ENCODE measurements at regions of chr11 and their contacts with region 1.

Region 1: GRCh38 chr11:35158701-35159510 is 19.9 kb downstream of the CD44 start:
- DNase-seq: peak; percentile 43 to 48
- ATAC-seq: peak; percentile 64 to 75
- H3K4me3 ChIP-seq: no peak overlapping the region
- H3K27ac ChIP-seq: peak overlapping the region; percentile 13 to 47 (median 30)
- H3K4me1 ChIP-seq: peaks cover 8 to 29% of the 10 kb centered on the region in 2 donors
- H3K27me3 ChIP-seq: no peaks in the 10 kb centered on the region
- CTCF ChIP-seq: no peak
- POLR2A ChIP-seq: no peak

Region 2: GRCh38 chr11:34523068-34523467 is 635.8 kb before region 1 on chr11:
- in situ Hi-C with region 1: no loop called
- intact Hi-C with region 1: no loop called
- DNase-seq: no peak
- ATAC-seq: no peak
- H3K4me3 ChIP-seq: no peak overlapping the region
- H3K27ac ChIP-seq: no peak overlapping the region
- H3K4me1 ChIP-seq: no peaks in the 10 kb centered on the region
- H3K27me3 ChIP-seq: no peaks in the 10 kb centered on the region
- CTCF ChIP-seq: no peak
- POLR2A ChIP-seq: no peak

Region 3: DNA sequence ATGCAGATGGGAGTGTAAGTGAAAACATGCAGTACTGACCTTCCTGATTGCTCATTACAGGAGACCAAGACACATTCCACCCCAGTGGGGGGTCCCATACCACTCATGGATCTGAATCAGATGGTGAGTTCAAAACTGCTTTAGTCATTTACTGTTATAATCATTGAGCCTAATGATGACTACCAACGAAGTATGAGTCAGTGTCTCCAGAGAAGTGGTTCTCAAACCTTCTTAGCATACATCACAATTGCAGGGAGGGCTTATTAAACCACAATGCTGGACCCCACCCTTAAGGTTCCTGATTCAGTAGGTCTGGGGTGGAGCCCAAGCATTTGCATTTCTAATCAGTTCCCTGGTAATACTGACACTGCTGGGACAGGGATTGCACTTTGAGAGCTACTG is 55.9 kb after region 1 on chr11:
- in situ Hi-C with region 1: loop called in 1 of 4 experiments (anchors 10 kb)
- intact Hi-C with region 1: no loop called
- DNase-seq: no peak
- ATAC-seq: no peak
- H3K4me3 ChIP-seq: no peak overlapping the region
- H3K27ac ChIP-seq: no peak overlapping the region
- H3K4me1 ChIP-seq: no peaks in the 10 kb centered on the region
- H3K27me3 ChIP-seq: no peaks in the 10 kb centered on the region
- CTCF ChIP-seq: no peak
- POLR2A ChIP-seq: no peak

Measured in gastrocnemius medialis (tissue), 4 donors.